Prostate gland (tissue), 2 donors: ENCODE measurements at regions of chr2 and their contacts with region 1.

Region 1: DNA sequence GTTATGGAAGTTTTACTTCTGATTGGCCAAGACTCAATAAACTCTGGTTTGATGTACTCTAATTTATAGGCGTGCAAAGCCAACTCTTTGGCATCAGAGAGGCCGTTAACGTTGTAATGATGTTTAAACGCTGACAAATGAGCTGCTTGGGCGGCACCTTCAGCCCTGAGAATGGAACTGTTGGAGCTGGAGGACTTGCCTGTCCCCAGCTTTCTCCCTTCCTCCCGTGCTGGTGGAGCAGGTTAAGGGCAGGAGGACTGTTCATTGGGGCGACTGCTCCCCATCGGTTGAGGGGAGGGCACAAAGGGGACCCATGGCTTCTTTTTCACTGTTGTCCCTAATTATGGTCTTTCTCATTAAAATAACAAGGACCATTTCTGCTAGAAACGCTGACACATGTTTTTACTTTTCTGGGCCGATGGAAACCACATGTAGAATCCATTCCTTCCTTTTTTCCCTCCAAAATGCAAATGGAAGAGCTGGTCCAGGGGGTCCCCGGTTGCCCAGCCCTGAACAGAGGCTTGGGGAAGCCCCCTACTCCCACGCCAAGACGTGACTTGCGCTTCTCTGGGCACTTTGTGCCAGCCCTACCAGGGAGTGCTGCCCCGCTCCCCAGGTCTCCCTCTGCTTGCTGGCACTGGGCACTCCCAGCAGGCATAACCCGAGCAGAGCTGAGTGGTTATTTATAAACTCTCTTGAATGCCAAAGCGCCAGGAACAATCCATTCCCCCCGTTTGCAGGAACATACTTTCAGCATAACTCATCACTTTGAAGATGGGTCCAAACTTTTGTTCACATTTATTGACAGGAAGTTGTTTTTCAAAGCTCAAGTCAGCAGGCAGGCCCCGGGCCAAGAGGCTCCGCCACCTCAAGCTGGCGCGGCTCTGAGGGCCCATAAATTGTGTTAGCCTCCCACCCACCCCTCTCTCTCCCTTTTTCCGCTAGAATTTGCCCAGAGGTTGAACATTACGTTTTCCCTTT is 170.1 kb downstream of the ASB1 start:
- DNase-seq: peak; percentile 90
- H3K4me3 ChIP-seq: no peak overlapping the region
- H3K27ac ChIP-seq: peak overlapping the region; percentile 76 to 88
- H3K4me1 ChIP-seq: peaks cover 14% of the 10 kb centered on the region
- H3K27me3 ChIP-seq: no peaks in the 10 kb centered on the region
- CTCF ChIP-seq: peak in 1 of 4 experiments; percentile 21
- POLR2A ChIP-seq: peak; percentile 19

Region 2: GRCh38 chr2:237011206-237011795 is 1585.6 kb before region 1 on chr2:
- intact Hi-C with region 1: no loop called
- DNase-seq: no peak
- H3K4me3 ChIP-seq: no peak overlapping the region
- H3K27ac ChIP-seq: no peak overlapping the region
- H3K4me1 ChIP-seq: no peaks in the 10 kb centered on the region
- H3K27me3 ChIP-seq: no peaks in the 10 kb centered on the region
- CTCF ChIP-seq: no peak
- POLR2A ChIP-seq: no peak

Region 3: GRCh38 chr2:238528953-238529781 is 67.7 kb before region 1 on chr2:
- intact Hi-C with region 1: loop called (anchors 5 kb)
- DNase-seq: peak; percentile 55
- H3K4me3 ChIP-seq: no peak overlapping the region
- H3K27ac ChIP-seq: peak overlapping the region in 1 of 2 donors; percentile 3
- H3K4me1 ChIP-seq: no peaks in the 10 kb centered on the region
- H3K27me3 ChIP-seq: no peaks in the 10 kb centered on the region
- CTCF ChIP-seq: peak in 1 of 4 experiments; percentile 19
- POLR2A ChIP-seq: no peak

Region 4: DNA sequence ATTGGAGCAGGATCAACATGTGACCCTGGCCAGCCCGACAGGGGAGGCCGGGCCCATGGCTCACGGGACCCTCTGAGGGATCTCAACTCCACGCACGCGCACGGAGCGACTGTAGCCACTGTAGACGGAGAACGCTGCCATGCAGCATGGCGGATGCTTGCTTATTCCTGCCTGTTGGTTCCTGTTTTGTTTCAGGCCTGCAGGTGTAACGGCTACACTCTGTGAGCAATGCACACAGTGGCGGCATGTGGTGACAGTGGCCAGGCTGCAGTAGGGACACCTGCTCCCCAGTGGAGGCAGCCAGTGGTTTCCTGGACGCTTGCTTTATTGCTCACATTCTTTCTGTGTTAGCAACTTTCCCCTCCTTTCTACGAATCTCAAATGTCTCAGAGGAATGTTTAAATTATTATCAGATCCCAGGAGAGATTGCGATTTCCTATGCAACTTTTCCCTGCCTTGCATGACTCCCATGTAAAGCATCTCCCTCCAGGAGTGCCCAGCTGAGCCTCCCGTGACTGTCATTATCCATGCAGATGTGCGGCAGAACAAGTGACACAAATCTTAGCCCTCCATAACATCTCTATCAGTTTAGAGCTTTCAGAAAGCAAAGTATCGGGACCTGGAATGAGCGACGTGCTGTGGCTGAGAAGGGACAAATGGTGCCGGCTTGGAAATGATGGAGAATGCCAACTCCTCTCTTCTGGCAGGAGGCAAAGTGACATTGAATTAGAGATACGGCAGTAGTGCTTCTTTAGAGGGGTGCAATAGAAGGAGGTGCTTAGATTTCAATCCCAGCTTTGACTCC is 39.6 kb after region 1 on chr2:
- intact Hi-C with region 1: no loop called
- DNase-seq: no peak
- H3K4me3 ChIP-seq: no peak overlapping the region
- H3K27ac ChIP-seq: no peak overlapping the region
- H3K4me1 ChIP-seq: no peaks in the 10 kb centered on the region
- H3K27me3 ChIP-seq: no peaks in the 10 kb centered on the region
- CTCF ChIP-seq: no peak
- POLR2A ChIP-seq: no peak

Region 5: GRCh38 chr2:238684362-238685326 is 87.8 kb after region 1 on chr2:
- intact Hi-C with region 1: loop called (anchors 10 kb)
- DNase-seq: no peak
- H3K4me3 ChIP-seq: no peak overlapping the region
- H3K27ac ChIP-seq: no peak overlapping the region
- H3K4me1 ChIP-seq: no peaks in the 10 kb centered on the region
- H3K27me3 ChIP-seq: no peaks in the 10 kb centered on the region
- CTCF ChIP-seq: no peak
- POLR2A ChIP-seq: no peak